Activated CD4-positive, alpha-beta memory T cell treated with anti-CD3 and anti-CD28 coated beads for 36 hours (primary cell): ENCODE measurements at regions of chr10 and their contacts with region 1.

Region 1: GRCh38 chr10:96978621-96979154 is 146.6 kb downstream of the LCOR start:
- DNase-seq: no peak
- H3K4me3 Mint-ChIP-seq: peak overlapping the region; percentile 6
- H3K27ac Mint-ChIP-seq: peak overlapping the region; percentile 77
- H3K4me1 Mint-ChIP-seq: peaks cover 24% of the 10 kb centered on the region
- H3K27me3 Mint-ChIP-seq: no peaks in the 10 kb centered on the region

Region 2: GRCh38 chr10:96910488-96911395 is 67.9 kb before region 1 on chr10:
- CTCF ChIA-PET with region 1: interaction called, 4 read pairs
- POLR2A ChIA-PET with region 1: no interaction called
- intact Hi-C with region 1: loop called (anchors 1 kb)
- DNase-seq: no peak
- H3K4me3 Mint-ChIP-seq: no peak overlapping the region
- H3K27ac Mint-ChIP-seq: no peak overlapping the region
- H3K4me1 Mint-ChIP-seq: peaks cover 23% of the 10 kb centered on the region
- H3K27me3 Mint-ChIP-seq: no peaks in the 10 kb centered on the region

Region 3: GRCh38 chr10:96960872-96961271 is 17.8 kb before region 1 on chr10:
- CTCF ChIA-PET with region 1: no interaction called
- POLR2A ChIA-PET with region 1: no interaction called
- intact Hi-C with region 1: no loop called
- DNase-seq: no peak
- H3K4me3 Mint-ChIP-seq: no peak overlapping the region
- H3K27ac Mint-ChIP-seq: peak overlapping the region; percentile 6
- H3K4me1 Mint-ChIP-seq: peaks cover 11% of the 10 kb centered on the region
- H3K27me3 Mint-ChIP-seq: no peaks in the 10 kb centered on the region